ENCODE measurements at regions of chr4 and their contacts with region 1.

Region 1: GRCh38 chr4:156475322-156475721 is 496.3 kb downstream of the PDGFC start:
- DNase-seq: peak; percentile 69
- H3K4me3 ChIP-seq: no peak overlapping the region
- H3K27ac ChIP-seq: peak overlapping the region; percentile 64
- H3K4me1 ChIP-seq: peaks cover 17% of the 10 kb centered on the region
- H3K27me3 ChIP-seq: no peaks in the 10 kb centered on the region
- CTCF ChIP-seq: peak; percentile 32 to 42
- POLR2A ChIP-seq: no peak

Region 2: GRCh38 chr4:156362581-156362980 is 112.7 kb before region 1 on chr4:
- CTCF ChIA-PET with region 1: no interaction called
- POLR2A ChIA-PET with region 1: no interaction called
- dilution Hi-C with region 1: no loop called
- intact Hi-C with region 1: no loop called
- DNase-seq: no peak
- H3K4me3 ChIP-seq: no peak overlapping the region
- H3K27ac ChIP-seq: no peak overlapping the region
- H3K4me1 ChIP-seq: no peaks in the 10 kb centered on the region
- H3K27me3 ChIP-seq: no peaks in the 10 kb centered on the region
- CTCF ChIP-seq: no peak
- POLR2A ChIP-seq: no peak

Region 3: GRCh38 chr4:156594624-156595023 is 119.3 kb after region 1 on chr4:
- CTCF ChIA-PET with region 1: interaction called, 6 read pairs
- POLR2A ChIA-PET with region 1: no interaction called
- dilution Hi-C with region 1: no loop called
- intact Hi-C with region 1: loop called (anchors 1 kb)
- DNase-seq: no peak
- H3K4me3 ChIP-seq: no peak overlapping the region
- H3K27ac ChIP-seq: no peak overlapping the region
- H3K4me1 ChIP-seq: peaks cover 12% of the 10 kb centered on the region
- H3K27me3 ChIP-seq: no peaks in the 10 kb centered on the region
- CTCF ChIP-seq: no peak
- POLR2A ChIP-seq: no peak

Region 4: GRCh38 chr4:156771171-156771837 is 296.0 kb after region 1 on chr4:
- CTCF ChIA-PET with region 1: interaction called, 6 read pairs
- POLR2A ChIA-PET with region 1: no interaction called
- dilution Hi-C with region 1: no loop called
- intact Hi-C with region 1: loop called (anchors 5 kb)
- DNase-seq: peak; percentile 88
- H3K4me3 ChIP-seq: peak overlapping the region in 1 of 3 experiments; percentile 13
- H3K27ac ChIP-seq: peak overlapping the region; percentile 77
- H3K4me1 ChIP-seq: peaks cover 14% of the 10 kb centered on the region
- H3K27me3 ChIP-seq: no peaks in the 10 kb centered on the region
- CTCF ChIP-seq: no peak
- POLR2A ChIP-seq: peak; percentile 36

Region 5: DNA sequence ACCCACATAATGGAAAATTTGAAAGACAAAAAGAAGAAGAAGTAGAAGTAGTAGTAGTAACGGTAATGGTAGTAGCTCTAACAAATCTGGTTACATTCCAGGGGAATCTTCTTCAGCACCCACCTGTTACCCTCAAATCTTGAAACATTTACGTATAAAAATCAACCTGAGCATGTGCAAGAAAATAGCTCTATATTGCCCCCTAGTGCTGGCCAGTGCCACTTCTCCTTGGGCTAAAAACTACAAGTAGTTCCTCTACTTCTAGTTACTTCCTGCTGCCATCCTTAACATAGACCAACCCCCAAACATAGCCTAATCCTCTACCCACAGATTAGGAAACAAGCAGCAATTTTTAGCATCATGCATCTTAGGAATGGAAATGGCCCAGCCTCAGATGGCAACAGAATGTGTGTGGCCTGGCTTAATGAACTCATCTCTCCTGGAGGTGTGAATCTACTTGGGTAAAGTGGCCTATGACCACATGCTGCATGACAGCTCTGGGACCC is 493.2 kb after region 1 on chr4:
- CTCF ChIA-PET with region 1: interaction called, 203 read pairs
- POLR2A ChIA-PET with region 1: no interaction called
- dilution Hi-C with region 1: no loop called
- intact Hi-C with region 1: loop called (anchors 1 kb)
- DNase-seq: peak; percentile 81
- H3K4me3 ChIP-seq: no peak overlapping the region
- H3K27ac ChIP-seq: peak overlapping the region; percentile 20
- H3K4me1 ChIP-seq: peaks cover 30% of the 10 kb centered on the region
- H3K27me3 ChIP-seq: no peaks in the 10 kb centered on the region
- CTCF ChIP-seq: peak; percentile 64 to 77
- POLR2A ChIP-seq: no peak

Region 6: GRCh38 chr4:157035471-157035870 is 560.1 kb after region 1 on chr4:
- CTCF ChIA-PET with region 1: interaction called, 10 read pairs
- POLR2A ChIA-PET with region 1: no interaction called
- dilution Hi-C with region 1: no loop called
- intact Hi-C with region 1: no loop called
- DNase-seq: peak; percentile 86
- H3K4me3 ChIP-seq: no peak overlapping the region
- H3K27ac ChIP-seq: no peak overlapping the region
- H3K4me1 ChIP-seq: no peaks in the 10 kb centered on the region
- H3K27me3 ChIP-seq: no peaks in the 10 kb centered on the region
- CTCF ChIP-seq: no peak
- POLR2A ChIP-seq: no peak

Region 7: GRCh38 chr4:157172011-157172410 is 696.7 kb after region 1 on chr4:
- CTCF ChIA-PET with region 1: interaction called, 16 read pairs
- POLR2A ChIA-PET with region 1: no interaction called
- dilution Hi-C with region 1: no loop called
- intact Hi-C with region 1: no loop called
- DNase-seq: peak; percentile 22
- H3K4me3 ChIP-seq: no peak overlapping the region
- H3K27ac ChIP-seq: no peak overlapping the region
- H3K4me1 ChIP-seq: no peaks in the 10 kb centered on the region
- H3K27me3 ChIP-seq: no peaks in the 10 kb centered on the region
- CTCF ChIP-seq: no peak
- POLR2A ChIP-seq: no peak

Region 8: DNA sequence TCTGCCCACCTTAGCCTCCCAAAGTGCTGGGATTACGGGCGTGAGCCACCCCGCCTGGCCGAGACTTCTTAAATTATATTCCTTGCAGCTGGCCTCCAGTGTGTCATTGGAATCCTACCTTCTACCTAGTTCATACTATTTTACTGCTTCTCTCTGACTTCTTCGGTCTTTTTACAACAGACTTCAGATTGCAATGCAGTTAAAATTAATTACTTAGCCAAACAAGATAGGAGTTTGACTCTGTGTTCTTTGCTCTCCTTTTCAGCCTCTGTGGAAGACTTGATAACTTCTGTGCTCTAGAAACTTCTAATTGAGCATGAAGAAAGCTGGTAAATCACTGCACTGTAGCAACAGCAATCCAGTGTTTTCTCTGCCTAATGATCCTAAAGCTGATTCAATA is 1498.0 kb after region 1 on chr4:
- CTCF ChIA-PET with region 1: interaction called, 15 read pairs
- POLR2A ChIA-PET with region 1: no interaction called
- dilution Hi-C with region 1: no loop called
- intact Hi-C with region 1: loop called (anchors 1 kb)
- DNase-seq: no peak
- H3K4me3 ChIP-seq: no peak overlapping the region
- H3K27ac ChIP-seq: no peak overlapping the region
- H3K4me1 ChIP-seq: peaks cover 9% of the 10 kb centered on the region
- H3K27me3 ChIP-seq: no peaks in the 10 kb centered on the region
- CTCF ChIP-seq: no peak
- POLR2A ChIP-seq: no peak